HEK293T (cell line): ENCODE measurements at regions of chr11 and their contacts with region 1.

Region 1: GRCh38 chr11:1652771-1653540 is 23.4 kb downstream of the KRTAP5-5 start:
- DNase-seq: peak; percentile 90

Region 2: DNA sequence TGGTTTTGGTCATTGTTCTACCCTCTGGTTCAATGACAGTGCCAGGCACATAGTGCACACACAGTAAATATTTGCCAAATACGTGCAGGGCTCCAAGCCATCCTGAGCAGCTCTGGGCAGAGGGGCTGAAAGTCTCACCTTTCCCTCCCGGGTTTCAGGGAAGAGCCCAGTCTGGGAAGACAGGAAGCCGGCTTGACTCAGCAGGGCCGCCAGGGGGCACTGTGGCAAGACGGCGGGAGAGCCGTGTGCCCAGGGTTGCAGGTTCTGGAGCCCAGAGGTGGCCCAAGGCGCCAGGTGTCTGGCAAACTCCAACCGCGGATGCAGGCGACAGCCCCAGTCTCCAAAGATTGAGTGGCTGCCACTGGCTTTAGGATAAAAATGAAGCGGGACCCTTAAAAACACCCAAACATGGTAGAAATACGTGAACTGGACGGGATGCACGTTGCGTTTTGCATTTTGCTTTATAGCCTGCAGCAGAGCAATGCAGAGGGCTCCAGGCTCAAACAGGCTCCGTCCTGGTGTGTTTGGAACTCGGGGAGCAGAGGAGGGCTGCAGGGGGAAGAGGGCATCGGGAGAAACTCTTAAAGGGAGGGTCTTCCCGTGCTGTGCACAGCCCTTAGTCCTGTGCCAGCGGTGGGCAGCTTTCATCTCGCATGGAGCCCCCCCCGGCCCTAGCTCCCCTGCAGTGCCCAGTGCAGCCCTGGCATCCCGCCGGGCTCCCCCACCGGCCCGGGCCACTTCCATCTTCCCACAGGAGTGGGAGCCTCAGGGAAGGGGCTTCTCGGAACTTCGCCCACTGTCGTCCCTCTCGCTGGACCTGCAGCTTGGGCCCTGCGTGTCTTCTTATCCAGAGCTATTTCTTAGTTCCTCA is 12.6 kb before region 1 on chr11:
- CTCF ChIA-PET with region 1: interaction called, 17 read pairs
- POLR2A ChIA-PET with region 1: no interaction called
- DNase-seq: peak; percentile 81

Region 3: DNA sequence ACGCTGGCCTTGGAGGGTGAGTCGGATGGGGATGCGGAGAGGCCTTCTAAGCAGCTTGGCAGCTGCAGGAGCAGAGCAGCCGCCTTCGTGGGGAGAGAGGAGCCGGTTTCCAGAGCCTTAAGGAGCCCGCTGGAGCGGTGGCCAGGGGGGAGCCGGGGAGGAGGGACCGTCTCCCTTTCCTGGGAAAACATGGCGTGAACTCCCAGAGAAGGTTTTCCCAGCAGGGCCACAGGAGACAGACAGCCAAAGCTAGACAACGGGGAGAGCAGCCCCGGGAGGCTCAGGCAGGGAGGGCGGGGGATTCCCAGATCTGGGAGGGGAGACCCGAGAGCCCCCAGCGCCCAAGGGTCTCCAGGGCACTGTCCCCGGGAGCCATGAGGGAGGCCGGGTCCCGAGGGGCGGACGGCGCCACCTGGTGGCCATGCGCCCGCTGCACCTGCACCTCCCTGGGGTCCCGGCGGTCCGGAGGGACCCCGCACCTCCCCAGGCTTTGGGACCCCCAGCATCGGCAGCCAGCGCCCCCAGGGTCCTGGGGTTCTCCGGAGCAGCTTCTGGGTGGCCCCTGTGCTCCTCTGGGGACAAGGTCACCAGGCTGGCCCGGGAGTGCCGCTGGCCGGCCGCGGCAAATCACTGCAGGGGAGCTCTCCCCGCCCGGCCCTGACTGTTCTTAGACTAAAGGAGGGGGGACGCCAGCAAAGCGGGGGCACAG is 179.4 kb after region 1 on chr11:
- CTCF ChIA-PET with region 1: interaction called, 30 read pairs
- POLR2A ChIA-PET with region 1: no interaction called
- DNase-seq: peak; percentile 81